ENCODE measurements at regions of chr1 and their contacts with region 1.

Region 1: DNA sequence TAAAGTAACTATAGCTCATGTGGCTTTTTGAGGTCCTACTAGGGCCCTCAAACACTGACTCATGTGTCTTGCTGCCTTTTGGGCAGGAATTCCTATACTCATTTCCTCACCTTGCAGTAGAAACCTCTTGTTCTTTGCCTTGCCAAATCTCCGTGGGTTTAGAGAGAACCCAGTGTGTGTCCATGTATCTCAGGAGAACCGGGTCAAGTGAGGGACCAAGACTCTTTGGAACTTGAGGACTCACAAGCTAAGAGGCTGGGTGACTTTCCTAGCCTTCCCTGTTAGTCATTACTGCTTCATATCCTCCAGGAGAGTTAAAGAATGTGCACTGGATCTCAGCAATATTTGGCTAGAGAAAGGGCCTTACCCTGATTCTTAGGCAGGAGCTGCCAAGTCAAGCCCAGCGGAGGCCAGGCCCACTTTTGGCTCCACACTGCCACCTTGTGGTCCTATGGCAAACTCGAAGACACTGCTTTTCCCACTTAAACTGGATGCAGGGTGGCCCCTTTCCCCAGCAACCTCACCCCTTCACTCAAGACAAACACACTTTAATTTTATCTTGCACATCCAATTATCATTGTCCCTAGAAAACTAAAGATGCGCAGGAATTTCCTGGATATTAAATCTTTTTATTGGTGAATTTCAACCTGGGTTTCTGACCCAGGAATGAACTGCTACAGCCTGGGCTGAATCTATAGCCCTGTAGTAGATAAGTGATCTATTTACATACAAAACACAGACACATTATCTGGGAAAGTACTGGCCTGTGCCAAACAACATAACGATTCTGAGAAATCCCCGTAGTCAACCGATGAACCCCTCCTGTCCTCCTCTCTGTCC is 10.6 kb downstream of the AVPR1B start:
- DNase-seq: peak; percentile 72
- H3K4me3 ChIP-seq: no peak overlapping the region
- H3K27ac ChIP-seq: no peak overlapping the region
- H3K4me1 ChIP-seq: peaks cover 11% of the 10 kb centered on the region
- H3K27me3 ChIP-seq: no peaks in the 10 kb centered on the region
- CTCF ChIP-seq: peak; percentile 90 to 96

Region 2: GRCh38 chr1:205766038-205766437 is 340.5 kb before region 1 on chr1:
- CTCF ChIA-PET with region 1: no interaction called
- dilution Hi-C with region 1: no loop called
- in situ Hi-C with region 1: no loop called
- intact Hi-C with region 1: no loop called
- DNase-seq: peak; percentile 34
- H3K4me3 ChIP-seq: no peak overlapping the region
- H3K27ac ChIP-seq: no peak overlapping the region
- H3K4me1 ChIP-seq: no peaks in the 10 kb centered on the region
- H3K27me3 ChIP-seq: no peaks in the 10 kb centered on the region
- CTCF ChIP-seq: no peak

Region 3: DNA sequence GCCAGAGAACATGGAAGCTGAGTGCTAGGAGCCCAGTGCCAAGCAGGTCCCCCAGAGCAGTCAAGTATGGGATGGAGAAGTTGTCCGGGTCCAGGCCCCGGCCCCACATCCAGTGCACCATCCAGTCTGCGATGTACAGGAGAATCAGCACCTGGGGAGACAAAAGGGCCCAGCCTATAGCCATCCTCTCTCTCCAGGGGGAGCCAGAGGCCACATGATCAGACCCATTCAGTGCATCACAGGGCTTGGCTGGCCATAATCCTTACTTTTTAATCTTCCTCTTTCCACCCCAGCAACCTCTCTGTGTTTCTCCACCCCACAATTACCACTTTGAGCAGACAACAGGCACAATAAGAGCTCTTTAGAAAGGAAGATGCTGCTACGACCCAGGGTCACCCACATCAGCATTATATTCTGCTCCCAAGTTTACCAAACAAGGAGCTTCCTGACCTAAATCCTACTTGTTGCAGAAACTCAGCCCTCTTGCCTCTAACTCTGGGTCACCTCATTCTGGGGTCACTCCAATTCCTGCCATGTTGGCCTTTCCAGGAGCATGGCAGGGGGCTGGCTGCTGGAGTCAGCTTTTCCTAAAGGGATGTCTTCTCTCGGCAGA is 314.9 kb before region 1 on chr1:
- CTCF ChIA-PET with region 1: no interaction called
- dilution Hi-C with region 1: no loop called
- in situ Hi-C with region 1: loop called (anchors 10 to 25 kb)
- intact Hi-C with region 1: loop called (anchors 1 kb)
- DNase-seq: peak; percentile 42
- H3K4me3 ChIP-seq: no peak overlapping the region
- H3K27ac ChIP-seq: no peak overlapping the region
- H3K4me1 ChIP-seq: no peaks in the 10 kb centered on the region
- H3K27me3 ChIP-seq: no peaks in the 10 kb centered on the region
- CTCF ChIP-seq: peak; percentile 89 to 90

Region 4: GRCh38 chr1:205977402-205978014 is 129.0 kb before region 1 on chr1:
- CTCF ChIA-PET with region 1: interaction called, 11 read pairs
- dilution Hi-C with region 1: no loop called
- in situ Hi-C with region 1: loop called (anchors 5 kb)
- intact Hi-C with region 1: loop called (anchors 2 kb)
- DNase-seq: peak; percentile 54
- H3K4me3 ChIP-seq: no peak overlapping the region
- H3K27ac ChIP-seq: no peak overlapping the region
- H3K4me1 ChIP-seq: no peaks in the 10 kb centered on the region
- H3K27me3 ChIP-seq: no peaks in the 10 kb centered on the region
- CTCF ChIP-seq: peak; percentile 98 to 99

Region 5: GRCh38 chr1:206030714-206031113 is 75.8 kb before region 1 on chr1:
- CTCF ChIA-PET with region 1: interaction called, 4 read pairs
- dilution Hi-C with region 1: loop called (anchors 5 kb)
- in situ Hi-C with region 1: loop called in 1 of 2 experiments (anchors 5 kb)
- intact Hi-C with region 1: loop called (anchors 1 kb)
- DNase-seq: peak; percentile 90
- H3K4me3 ChIP-seq: no peak overlapping the region
- H3K27ac ChIP-seq: no peak overlapping the region
- H3K4me1 ChIP-seq: peaks cover 19% of the 10 kb centered on the region
- H3K27me3 ChIP-seq: no peaks in the 10 kb centered on the region
- CTCF ChIP-seq: peak; percentile 96 to 99

Region 6: DNA sequence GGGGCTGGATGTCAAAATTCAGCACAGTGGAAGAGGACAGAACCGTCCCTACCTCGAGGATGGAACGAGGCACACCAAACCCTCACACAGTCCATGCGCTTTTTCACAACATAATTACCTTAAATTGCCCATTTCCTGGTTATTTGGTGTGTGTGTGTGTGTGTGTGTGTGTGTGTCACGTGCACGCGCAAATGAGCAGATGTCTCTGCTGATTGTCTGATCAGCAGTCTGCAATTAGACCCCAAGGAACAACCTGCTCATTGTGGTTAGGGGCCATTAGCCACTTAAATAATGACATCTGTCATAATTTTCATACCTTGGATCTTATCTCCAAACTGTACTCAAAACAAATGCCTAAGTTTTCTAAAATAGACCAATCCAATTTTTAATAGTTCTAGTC is 12.5 kb before region 1 on chr1:
- CTCF ChIA-PET with region 1: no interaction called
- dilution Hi-C with region 1: no loop called
- in situ Hi-C with region 1: no loop called
- intact Hi-C with region 1: no loop called
- DNase-seq: no peak
- H3K4me3 ChIP-seq: no peak overlapping the region
- H3K27ac ChIP-seq: no peak overlapping the region
- H3K4me1 ChIP-seq: no peaks in the 10 kb centered on the region
- H3K27me3 ChIP-seq: no peaks in the 10 kb centered on the region
- CTCF ChIP-seq: no peak

Measured in mammary epithelial cell (primary cell).